Cardiac septum (tissue), 1 donor: ENCODE measurements at regions of chr18 and their contacts with region 1.

Region 1: GRCh38 chr18:55589625-55590291 is 1.8 kb upstream of the TCF4 start:
- DNase-seq: peak; percentile 97

Region 2: GRCh38 chr18:55322178-55322735 is 267.5 kb before region 1 on chr18:
- intact Hi-C with region 1: loop called (anchors 5 kb)
- DNase-seq: peak; percentile 82

Region 3: GRCh38 chr18:55401638-55402191 is 188.0 kb before region 1 on chr18:
- intact Hi-C with region 1: loop called (anchors 5 kb)
- DNase-seq: no peak

Region 4: GRCh38 chr18:55439056-55439455 is 150.7 kb before region 1 on chr18:
- intact Hi-C with region 1: no loop called
- DNase-seq: no peak

Region 5: DNA sequence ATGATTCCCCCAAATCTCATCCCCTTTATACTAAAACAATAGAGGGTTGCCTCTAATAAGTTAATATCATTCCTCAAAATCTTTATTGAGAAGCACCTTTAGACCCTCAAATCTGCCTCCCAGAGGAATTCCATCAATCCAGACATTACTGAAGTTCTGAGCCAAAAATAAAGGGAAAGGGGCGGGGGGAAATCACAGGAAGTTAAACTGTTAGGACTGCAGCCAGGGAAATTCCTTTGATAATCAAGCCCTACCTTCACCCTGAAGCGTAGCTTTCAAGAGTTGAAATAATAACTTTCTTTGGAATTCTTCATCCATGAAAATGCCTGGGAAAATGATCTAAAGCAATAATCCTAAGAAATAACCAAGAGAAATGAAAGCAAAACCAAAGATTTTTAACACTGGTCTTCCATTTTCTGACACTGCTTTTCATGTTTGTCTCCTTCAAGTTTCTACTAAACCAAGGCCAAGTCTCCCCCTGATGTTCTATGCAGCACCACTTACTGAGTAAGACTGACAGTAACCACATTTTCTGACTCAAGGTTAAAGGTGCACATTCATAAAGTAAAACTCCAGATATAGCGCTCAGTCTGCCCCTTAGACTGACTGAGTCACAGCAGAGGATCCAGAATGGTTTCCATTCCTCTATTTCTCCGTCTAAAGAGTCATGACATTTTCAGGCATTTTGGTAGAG is 80.0 kb before region 1 on chr18:
- intact Hi-C with region 1: loop called (anchors 5 kb)
- DNase-seq: no peak

Region 6: GRCh38 chr18:55856229-55856628 is 266.5 kb after region 1 on chr18:
- intact Hi-C with region 1: no loop called
- DNase-seq: no peak

Region 7: GRCh38 chr18:55869556-55870501 is 280.1 kb after region 1 on chr18:
- intact Hi-C with region 1: loop called (anchors 5 kb)
- DNase-seq: no peak